ENCODE measurements at regions of chr10 and their contacts with region 1.

Region 1: DNA sequence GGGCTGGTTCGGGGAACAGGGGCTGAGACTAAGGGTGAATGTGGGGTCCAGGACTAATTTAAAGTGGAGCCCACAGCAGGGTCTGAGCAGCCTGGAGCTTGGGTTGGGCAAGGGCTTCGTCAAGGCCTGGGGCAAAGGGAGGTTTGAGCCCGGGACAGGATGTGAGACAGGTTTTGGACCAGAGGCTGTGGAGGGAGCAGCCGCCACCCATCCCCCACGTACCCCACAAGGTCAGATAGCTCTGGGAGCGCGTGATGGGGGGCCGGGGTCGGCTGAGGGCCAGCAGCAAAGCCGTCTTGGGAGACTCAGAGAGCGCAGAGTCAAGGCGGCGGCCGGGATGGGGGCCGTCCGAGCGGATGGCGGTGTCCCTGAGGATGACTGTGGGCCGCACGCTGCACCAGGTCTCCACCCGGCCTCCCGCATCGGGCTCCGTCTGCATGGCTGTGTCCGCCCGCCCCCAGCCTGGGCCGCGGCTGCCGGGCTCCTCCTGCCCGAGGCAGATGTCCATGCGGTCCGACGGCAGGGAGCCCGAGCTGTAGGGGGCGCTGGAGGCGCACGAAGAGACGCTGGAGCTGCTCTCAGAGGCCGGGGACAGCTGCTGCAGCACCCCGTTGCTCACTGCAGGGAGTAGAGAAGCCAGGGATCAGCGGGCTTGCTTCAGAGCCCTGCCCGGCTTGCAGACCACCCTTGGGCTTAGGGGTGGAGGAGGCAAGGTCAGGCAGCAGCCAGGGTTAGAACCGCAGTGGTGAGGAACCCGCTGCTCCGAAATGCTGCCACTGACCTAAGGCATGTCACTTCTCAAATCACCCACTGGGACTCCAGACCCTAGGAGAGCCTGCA is 12.1 kb downstream of the PDZD7 start:
- DNase-seq: no peak
- ATAC-seq: peak; percentile 87
- H3K4me3 ChIP-seq: no peak overlapping the region
- H3K27ac ChIP-seq: no peak overlapping the region
- H3K4me1 ChIP-seq: peaks cover 9% of the 10 kb centered on the region
- H3K27me3 ChIP-seq: peaks cover 10% of the 10 kb centered on the region in 2 experiments
- CTCF ChIP-seq: peak; percentile 61 to 77 (median 61)
- EP300 ChIP-seq: no peak
- POLR2A ChIP-seq: no peak
- RAD21 ChIP-seq: peak; percentile 43; the same call in 1 of the 2 replicates

Region 2: DNA sequence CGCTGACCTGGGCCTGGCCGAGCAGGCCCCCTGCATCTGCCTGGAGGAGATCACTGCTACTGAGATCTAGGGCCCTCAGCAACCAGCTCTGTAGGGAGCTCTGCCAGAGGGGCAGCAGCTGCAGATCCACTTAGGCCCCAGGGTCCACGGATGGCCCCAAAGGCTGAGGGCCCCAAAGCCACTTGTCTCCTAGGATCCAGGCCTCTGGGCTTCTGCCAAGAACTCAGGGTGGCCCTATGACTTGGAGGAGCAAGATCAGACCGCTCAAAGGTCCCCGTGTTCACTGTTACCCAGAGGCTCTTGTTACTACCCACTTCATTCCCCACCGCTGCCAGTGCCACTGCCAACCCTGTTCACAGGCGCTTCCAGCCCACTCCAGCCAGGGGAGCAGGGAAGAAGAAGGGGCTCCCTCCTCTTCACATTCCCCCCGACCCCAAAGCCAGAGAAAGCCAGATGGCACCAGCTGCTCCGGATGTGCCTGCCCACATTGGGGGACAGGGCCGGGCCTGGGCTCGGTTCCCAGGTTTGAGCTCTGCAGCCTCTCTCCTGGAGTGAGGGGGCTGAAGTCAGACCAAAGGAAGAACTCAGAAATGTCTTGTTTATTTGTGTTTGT is 11.6 kb before region 1 on chr10:
- CTCF ChIA-PET with region 1: interaction called, 21 read pairs
- POLR2A ChIA-PET with region 1: no interaction called
- RAD21 ChIA-PET with region 1: interaction called, 5 read pairs
- SMC1A ChIA-PET with region 1: interaction called, 4 read pairs
- in situ Hi-C with region 1: no loop called
- intact Hi-C with region 1: no loop called
- DNase-seq: no peak
- ATAC-seq: no peak
- H3K4me3 ChIP-seq: no peak overlapping the region
- H3K27ac ChIP-seq: no peak overlapping the region
- H3K4me1 ChIP-seq: no peaks in the 10 kb centered on the region; the same call in 1 of the 2 replicates
- H3K27me3 ChIP-seq: no peaks in the 10 kb centered on the region
- CTCF ChIP-seq: no peak
- EP300 ChIP-seq: no peak
- POLR2A ChIP-seq: no peak
- RAD21 ChIP-seq: no peak

Region 3: DNA sequence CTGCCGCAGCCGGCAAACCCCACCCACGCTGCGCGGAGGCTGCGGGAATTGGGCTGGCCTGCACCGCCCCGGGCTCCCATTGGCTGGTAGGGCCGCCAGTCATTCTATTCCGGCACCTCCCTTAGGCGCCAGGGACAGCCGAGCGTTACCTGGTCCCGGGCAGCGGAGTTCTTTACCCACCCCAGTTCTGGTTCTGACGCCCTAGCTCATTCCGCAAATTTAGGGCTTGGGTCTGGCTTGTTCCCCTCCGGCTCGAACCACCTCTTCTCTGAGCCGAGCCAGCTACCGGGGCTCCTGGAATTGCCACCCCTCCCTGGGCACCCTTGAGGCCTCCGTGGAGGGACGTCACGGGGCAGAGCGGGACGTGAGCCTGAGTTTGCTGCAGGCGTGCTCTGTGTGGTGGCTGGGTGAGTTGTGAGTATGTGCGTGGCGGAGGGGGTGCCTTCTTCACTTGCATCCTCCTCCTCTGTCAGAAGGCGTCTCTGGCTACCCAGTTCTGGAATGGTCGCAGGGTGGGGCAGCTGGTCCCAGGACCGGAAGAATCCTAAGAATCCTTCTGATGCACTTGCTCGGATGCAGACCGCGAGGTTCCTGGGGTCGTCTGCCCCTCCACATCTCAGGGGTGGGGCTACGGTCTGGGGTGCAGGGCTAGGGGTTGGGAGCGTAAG is 12.4 kb after region 1 on chr10 and contains the starts of genes PDZD7 and SFXN3:
- CTCF ChIA-PET with region 1: interaction called, 86 read pairs
- POLR2A ChIA-PET with region 1: interaction called, 3 read pairs
- RAD21 ChIA-PET with region 1: interaction called, 13 read pairs
- SMC1A ChIA-PET with region 1: interaction called, 5 read pairs
- in situ Hi-C with region 1: no loop called
- intact Hi-C with region 1: no loop called
- DNase-seq: peak; percentile 48
- ATAC-seq: peak; percentile 96
- H3K4me3 ChIP-seq: peak within 1 kb of the TSS; percentile 64
- H3K27ac ChIP-seq: no peak within 1 kb of the TSS
- H3K4me1 ChIP-seq: peaks cover 21% of the 10 kb centered on the region
- H3K27me3 ChIP-seq: peaks cover 5 to 9% of the 10 kb centered on the region in 2 experiments
- CTCF ChIP-seq: no peak
- EP300 ChIP-seq: no peak
- POLR2A ChIP-seq: no peak
- RAD21 ChIP-seq: no peak
- polyA plus RNA-seq, gene PDZD7: not detected
- polyA plus RNA-seq, gene SFXN3: 0.05 to 0.44 TPM

Region 4: DNA sequence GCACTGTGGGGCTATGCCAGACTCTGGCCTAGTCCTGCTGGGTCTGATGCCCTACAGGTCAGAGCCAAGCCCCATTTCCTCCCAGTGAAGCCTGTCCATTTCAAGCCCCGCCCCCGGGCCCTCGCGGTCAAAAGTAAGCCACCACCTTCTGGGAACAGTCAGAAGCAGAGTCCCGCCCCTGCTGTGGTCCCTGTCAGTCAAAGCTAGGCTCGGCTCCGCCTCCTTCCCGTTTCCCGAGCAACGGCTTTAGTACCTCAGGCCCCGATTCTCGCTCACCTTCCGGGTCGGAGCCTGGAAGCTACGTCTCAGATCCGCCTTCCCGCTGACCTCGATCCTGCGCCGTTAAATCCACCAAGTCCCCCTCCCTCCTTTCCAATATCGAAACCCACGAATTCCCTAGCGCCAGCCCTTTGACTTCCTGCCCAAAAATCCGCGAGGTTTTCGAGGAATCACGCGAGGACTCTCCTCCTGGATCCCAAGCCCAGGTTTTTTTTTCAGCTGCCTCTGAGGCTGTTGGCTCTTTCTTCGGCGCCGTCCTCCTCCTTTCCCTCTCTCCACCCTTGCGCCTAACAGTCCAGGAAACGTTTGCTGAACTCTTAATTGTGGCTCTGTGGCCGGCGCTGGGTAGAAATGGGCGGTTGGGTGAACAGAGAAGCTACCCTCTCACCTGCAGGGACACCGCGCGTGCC is 24.0 kb after region 1 on chr10:
- CTCF ChIA-PET with region 1: interaction called, 22 read pairs
- POLR2A ChIA-PET with region 1: interaction called, 3 read pairs
- RAD21 ChIA-PET with region 1: interaction called, 7 read pairs
- SMC1A ChIA-PET with region 1: interaction called, 6 read pairs
- in situ Hi-C with region 1: no loop called
- intact Hi-C with region 1: no loop called
- DNase-seq: peak; percentile 83
- ATAC-seq: peak; percentile 96
- H3K4me3 ChIP-seq: peak overlapping the region; percentile 63
- H3K27ac ChIP-seq: peak overlapping the region; percentile 7; the same call in 1 of the 2 replicates
- H3K4me1 ChIP-seq: peaks cover 5% of the 10 kb centered on the region; the same call in 1 of the 2 replicates
- H3K27me3 ChIP-seq: no peaks in the 10 kb centered on the region; a peak in 1 of 4 replicates
- CTCF ChIP-seq: no peak
- EP300 ChIP-seq: no peak
- POLR2A ChIP-seq: peak; percentile 87
- RAD21 ChIP-seq: no peak

Region 5: DNA sequence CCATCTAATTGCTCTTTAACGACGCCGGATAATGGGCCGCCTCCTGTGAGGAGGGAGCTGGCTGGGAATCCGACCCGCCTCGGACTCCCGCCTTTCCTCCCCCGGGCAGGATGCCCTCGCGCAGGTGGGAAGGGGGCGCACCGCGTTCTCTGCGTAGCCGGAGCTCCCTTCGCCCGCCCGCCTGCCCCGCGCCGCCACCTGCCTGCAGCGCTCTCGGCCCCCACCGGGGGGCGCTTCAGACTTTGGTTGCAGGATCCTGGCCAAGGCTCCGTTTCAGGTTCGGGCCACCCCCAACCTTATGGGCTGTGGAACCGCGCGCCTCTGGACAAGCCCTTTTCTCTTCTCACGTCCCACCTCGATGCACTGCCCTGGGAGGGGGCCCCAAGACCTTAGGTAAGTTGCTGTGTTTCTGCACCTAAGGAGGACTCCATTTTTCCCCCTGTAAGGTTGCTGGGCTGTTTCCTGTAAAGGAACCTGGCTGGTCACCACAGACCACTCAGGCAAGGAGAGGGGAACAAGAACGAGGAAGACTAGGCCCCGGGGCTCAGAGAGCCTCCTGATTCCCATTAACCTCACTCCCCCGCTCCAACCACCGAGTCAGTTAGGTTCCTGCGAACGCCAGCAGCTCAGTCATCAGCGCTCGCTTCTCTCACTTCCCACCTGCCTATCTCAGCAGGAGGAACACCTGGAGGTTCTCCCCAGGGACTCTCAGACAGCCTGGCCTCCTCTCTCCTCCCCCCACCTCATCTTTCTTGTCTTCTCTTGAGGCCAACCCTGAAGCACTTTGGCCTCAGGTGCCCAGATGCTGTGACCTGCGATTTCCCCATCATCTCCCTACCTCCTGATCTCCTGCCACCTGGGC is 31.6 kb after region 1 on chr10:
- CTCF ChIA-PET with region 1: interaction called, 30 read pairs
- POLR2A ChIA-PET with region 1: no interaction called
- RAD21 ChIA-PET with region 1: interaction called, 6 read pairs
- SMC1A ChIA-PET with region 1: no interaction called
- in situ Hi-C with region 1: no loop called
- intact Hi-C with region 1: no loop called
- DNase-seq: no peak
- ATAC-seq: peak; percentile 97
- H3K4me3 ChIP-seq: peak overlapping the region; percentile 56; the same call in 1 of the 2 replicates
- H3K27ac ChIP-seq: no peak overlapping the region
- H3K4me1 ChIP-seq: peaks cover 8% of the 10 kb centered on the region
- H3K27me3 ChIP-seq: peaks cover 0 to 1% of the 10 kb centered on the region in 2 experiments; a peak in 2 of 4 replicates
- CTCF ChIP-seq: peak; percentile 85 to 88 (median 87)
- EP300 ChIP-seq: no peak
- POLR2A ChIP-seq: no peak
- RAD21 ChIP-seq: peak; percentile 65

Region 6: GRCh38 chr10:101060036-101060950 is 41.5 kb after region 1 on chr10:
- CTCF ChIA-PET with region 1: interaction called, 16 read pairs
- POLR2A ChIA-PET with region 1: no interaction called
- RAD21 ChIA-PET with region 1: interaction called, 9 read pairs
- SMC1A ChIA-PET with region 1: interaction called, 3 read pairs
- in situ Hi-C with region 1: no loop called
- intact Hi-C with region 1: no loop called
- DNase-seq: peak; percentile 81
- ATAC-seq: peak; percentile 54
- H3K4me3 ChIP-seq: peak overlapping the region; percentile 95
- H3K27ac ChIP-seq: peak overlapping the region; percentile 98
- H3K4me1 ChIP-seq: peaks cover 31% of the 10 kb centered on the region
- H3K27me3 ChIP-seq: peaks cover 0 to 3% of the 10 kb centered on the region in 2 experiments; a peak in 1 of 4 replicates
- CTCF ChIP-seq: peak; percentile 87 to 92 (median 92)
- EP300 ChIP-seq: no peak
- POLR2A ChIP-seq: no peak; the same call in 1 of the 2 replicates
- RAD21 ChIP-seq: peak; percentile 83

Region 7: DNA sequence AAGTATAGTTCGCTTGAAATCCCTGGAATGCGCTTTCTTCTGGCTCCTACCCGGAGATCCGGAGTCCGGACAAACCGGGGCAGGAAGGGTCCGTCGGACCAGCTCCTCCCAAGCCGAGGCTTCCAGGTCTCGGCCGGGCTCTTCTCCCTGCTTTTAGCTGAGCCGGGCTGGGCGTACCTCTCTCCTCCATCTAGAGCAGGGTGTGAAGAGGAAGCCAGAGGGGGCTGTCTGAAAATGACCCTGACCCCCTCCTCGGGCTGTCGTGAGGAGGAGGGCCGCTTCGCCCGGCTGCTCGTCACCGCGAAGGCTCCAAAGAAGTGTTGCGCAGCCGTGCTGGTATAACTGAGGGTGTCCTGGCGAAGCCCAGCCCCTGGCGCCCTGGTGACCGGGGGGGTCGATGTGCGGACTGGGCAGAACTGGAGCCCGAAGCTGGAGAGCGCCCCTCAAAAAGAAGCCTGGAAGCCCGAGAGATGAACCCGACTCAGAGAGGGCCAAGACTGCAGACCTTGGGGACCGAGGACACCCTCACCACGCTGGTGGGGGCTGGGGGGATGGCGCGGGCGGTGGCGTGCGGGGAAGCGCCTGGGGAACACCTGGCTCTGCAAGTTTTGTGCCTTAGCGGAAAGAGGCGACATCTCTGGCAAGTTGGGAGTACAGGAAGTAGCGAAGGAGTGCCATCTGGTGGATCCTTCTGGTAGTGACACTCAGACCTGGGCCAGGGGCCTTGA is 48.7 kb after region 1 on chr10:
- CTCF ChIA-PET with region 1: interaction called, 28 read pairs
- POLR2A ChIA-PET with region 1: no interaction called
- RAD21 ChIA-PET with region 1: interaction called, 8 read pairs
- SMC1A ChIA-PET with region 1: interaction called, 3 read pairs
- in situ Hi-C with region 1: no loop called
- intact Hi-C with region 1: no loop called
- DNase-seq: peak; percentile 44
- ATAC-seq: peak; percentile 74
- H3K4me3 ChIP-seq: peak overlapping the region; percentile 87
- H3K27ac ChIP-seq: no peak overlapping the region
- H3K4me1 ChIP-seq: peaks cover 41% of the 10 kb centered on the region
- H3K27me3 ChIP-seq: peaks cover 2 to 3% of the 10 kb centered on the region in 2 experiments; a peak in 1 of 4 replicates
- CTCF ChIP-seq: peak; percentile 81 to 89 (median 82)
- EP300 ChIP-seq: no peak
- POLR2A ChIP-seq: no peak
- RAD21 ChIP-seq: peak; percentile 73

Region 8: DNA sequence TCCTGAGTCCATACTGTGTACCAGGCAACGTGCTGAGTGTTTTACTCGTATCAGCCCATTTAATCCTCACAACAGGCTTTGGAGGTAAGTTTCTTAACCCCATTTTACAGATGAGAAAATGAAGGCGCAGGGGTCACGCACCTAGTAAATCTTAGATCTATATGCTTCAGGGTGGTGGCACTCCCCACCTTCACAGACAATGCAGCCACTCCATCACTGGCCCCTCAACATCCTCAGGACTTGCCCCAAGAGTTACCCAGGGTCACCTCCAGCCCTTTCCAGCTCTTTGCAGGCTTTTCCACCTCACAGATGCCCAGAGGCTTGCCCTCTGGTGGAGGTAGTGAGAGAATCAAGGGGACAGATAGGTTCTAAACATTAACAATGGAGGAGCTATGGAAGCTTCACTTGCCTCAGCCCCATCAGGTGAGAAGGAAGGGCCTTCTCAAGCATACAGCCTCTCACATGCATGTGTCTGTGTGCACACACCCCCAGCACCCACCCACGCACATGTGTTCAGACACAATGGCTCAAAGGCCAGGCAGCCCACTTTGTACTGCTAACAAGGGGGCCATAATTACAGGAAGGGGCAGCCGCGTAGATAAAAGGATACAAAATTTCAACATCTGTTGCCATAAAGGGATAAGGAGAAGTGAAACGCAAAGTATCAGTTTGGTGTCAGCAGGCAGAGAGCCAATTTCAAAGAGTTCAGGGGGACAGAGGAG is 598.4 kb after region 1 on chr10:
- CTCF ChIA-PET with region 1: no interaction called
- POLR2A ChIA-PET with region 1: no interaction called
- RAD21 ChIA-PET with region 1: no interaction called
- SMC1A ChIA-PET with region 1: no interaction called
- in situ Hi-C with region 1: no loop called
- intact Hi-C with region 1: no loop called
- DNase-seq: peak; percentile 33
- ATAC-seq: peak; percentile 83
- H3K4me3 ChIP-seq: no peak overlapping the region
- H3K27ac ChIP-seq: peak overlapping the region; percentile 62
- H3K4me1 ChIP-seq: peaks cover 19% of the 10 kb centered on the region
- H3K27me3 ChIP-seq: no peaks in the 10 kb centered on the region
- CTCF ChIP-seq: peak; percentile 0 to 22 (median 16); a peak in 1 of 6 replicates
- EP300 ChIP-seq: peak; percentile 46 to 50; a peak in 2 of 4 replicates
- POLR2A ChIP-seq: 0 out of 2 replicates have a peak, but pooled peaks have one; percentile 6
- RAD21 ChIP-seq: no peak

Measured in GM12878 (cell line).